Heart right ventricle (tissue), 16 donors: ENCODE measurements at regions of chr16 and their contacts with region 1.

Region 1: GRCh38 chr16:19330841-19331397 is 45.4 kb downstream of the CLEC19A start:
- DNase-seq: no peak
- ATAC-seq: no peak
- H3K4me3 ChIP-seq: no peak overlapping the region
- H3K27ac ChIP-seq: no peak overlapping the region
- H3K4me1 ChIP-seq: no peaks in the 10 kb centered on the region
- H3K27me3 ChIP-seq: peaks cover 0 to 4% (median 0%) of the 10 kb centered on the region in 7 donors
- CTCF ChIP-seq: no peak

Region 2: GRCh38 chr16:19393226-19394074 is 62.5 kb after region 1 on chr16:
- intact Hi-C with region 1: loop called in 1 of 10 experiments (anchors 10 kb)
- DNase-seq: no peak
- ATAC-seq: no peak
- H3K4me3 ChIP-seq: no peak overlapping the region
- H3K27ac ChIP-seq: no peak overlapping the region
- H3K4me1 ChIP-seq: no peaks in the 10 kb centered on the region
- H3K27me3 ChIP-seq: peaks cover 0 to 50% (median 27%) of the 10 kb centered on the region in 7 donors
- CTCF ChIP-seq: no peak

Region 3: DNA sequence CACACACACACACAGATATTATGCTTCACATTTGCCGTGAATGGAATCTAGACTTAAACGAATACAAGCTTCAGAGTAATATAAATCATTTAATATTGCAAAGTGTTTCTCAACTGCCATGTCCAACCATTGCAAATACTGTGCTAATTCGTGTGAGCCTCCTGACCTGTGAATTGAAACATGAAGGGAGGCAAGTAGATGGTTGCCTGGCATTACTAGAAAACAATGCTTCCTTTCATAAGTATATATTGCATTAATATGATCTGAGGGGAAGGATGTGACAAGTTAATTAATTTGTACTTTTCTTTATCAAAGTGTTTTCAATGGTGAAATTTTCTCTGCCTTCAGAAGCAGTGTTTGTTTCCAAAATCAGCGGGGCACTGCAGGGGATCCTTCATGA is 768.5 kb after region 1 on chr16:
- intact Hi-C with region 1: loop called in 1 of 10 experiments (anchors 5 kb)
- DNase-seq: no peak
- ATAC-seq: no peak
- H3K4me3 ChIP-seq: no peak overlapping the region
- H3K27ac ChIP-seq: no peak overlapping the region
- H3K4me1 ChIP-seq: no peaks in the 10 kb centered on the region
- H3K27me3 ChIP-seq: peaks cover 0 to 16% (median 4%) of the 10 kb centered on the region in 7 donors
- CTCF ChIP-seq: no peak